IMR-90 (cell line): ENCODE measurements at regions of chr11 and their contacts with region 1.

Region 1: DNA sequence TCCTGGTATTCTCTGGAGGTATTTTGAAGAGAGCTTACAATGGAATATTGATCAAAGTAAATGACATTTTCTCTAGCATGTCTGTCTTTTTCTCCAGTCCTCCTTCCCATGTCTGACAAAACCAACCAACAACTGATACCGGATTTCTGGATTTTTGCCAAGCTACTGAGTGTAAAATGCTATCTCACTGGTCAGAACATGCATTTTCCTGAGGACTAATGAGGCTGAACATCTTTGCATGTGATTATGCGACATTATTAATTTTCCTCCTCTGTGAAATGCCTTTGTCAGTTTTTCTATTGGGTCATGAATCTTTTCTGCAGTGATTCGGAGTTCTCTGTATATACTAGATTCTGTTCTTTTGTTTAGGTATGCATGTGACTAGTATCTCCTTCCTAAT is 51.4 kb downstream of the CDON start:
- DNase-seq: no peak
- ATAC-seq: no peak
- H3K4me3 ChIP-seq: no peak overlapping the region
- H3K27ac ChIP-seq: no peak overlapping the region
- H3K4me1 ChIP-seq: no peaks in the 10 kb centered on the region
- H3K27me3 ChIP-seq: peaks cover 2% of the 10 kb centered on the region
- CTCF ChIP-seq: no peak
- POLR2A ChIP-seq: no peak
- RAD21 ChIP-seq: no peak

Region 2: DNA sequence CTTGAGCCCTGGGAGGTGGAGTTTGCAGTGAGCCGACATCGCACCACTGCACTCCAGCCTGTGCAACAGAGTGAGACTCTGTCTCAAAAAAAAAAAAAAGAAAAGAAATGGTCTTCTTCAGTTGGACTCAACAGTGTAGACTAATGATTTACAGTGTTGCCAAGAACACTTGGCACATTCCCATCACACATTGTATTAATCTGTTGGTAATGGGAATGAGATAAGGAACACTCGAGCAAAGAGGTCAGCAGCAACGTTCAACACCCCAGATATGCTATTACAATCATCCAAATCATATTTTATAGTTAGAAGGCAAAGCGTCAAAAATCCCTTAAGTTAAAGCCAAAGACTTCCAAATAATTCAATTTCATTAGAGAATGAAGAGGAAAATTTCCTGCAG is 36.9 kb after region 1 on chr11:
- CTCF ChIA-PET with region 1: no interaction called
- POLR2A ChIA-PET with region 1: no interaction called
- dilution Hi-C with region 1: no loop called
- in situ Hi-C with region 1: no loop called
- intact Hi-C with region 1: loop called (anchors 5 kb)
- DNase-seq: no peak
- ATAC-seq: no peak
- H3K4me3 ChIP-seq: no peak overlapping the region
- H3K27ac ChIP-seq: no peak overlapping the region
- H3K4me1 ChIP-seq: no peaks in the 10 kb centered on the region
- H3K27me3 ChIP-seq: peaks cover 5% of the 10 kb centered on the region
- CTCF ChIP-seq: no peak
- POLR2A ChIP-seq: no peak
- RAD21 ChIP-seq: no peak

Region 3: GRCh38 chr11:126186708-126187529 is 175.7 kb after region 1 on chr11:
- CTCF ChIA-PET with region 1: no interaction called
- POLR2A ChIA-PET with region 1: no interaction called
- dilution Hi-C with region 1: no loop called
- in situ Hi-C with region 1: no loop called
- intact Hi-C with region 1: no loop called
- DNase-seq: no peak
- ATAC-seq: peak; percentile 17; the same call in 1 of the 2 replicates
- H3K4me3 ChIP-seq: no peak overlapping the region
- H3K27ac ChIP-seq: no peak overlapping the region
- H3K4me1 ChIP-seq: no peaks in the 10 kb centered on the region
- H3K27me3 ChIP-seq: no peaks in the 10 kb centered on the region
- CTCF ChIP-seq: no peak
- POLR2A ChIP-seq: no peak
- RAD21 ChIP-seq: 0 out of 2 replicates have a peak, but pooled peaks have one; percentile 6

Region 4: GRCh38 chr11:126519764-126520734 is 508.8 kb after region 1 on chr11:
- CTCF ChIA-PET with region 1: no interaction called
- POLR2A ChIA-PET with region 1: no interaction called
- dilution Hi-C with region 1: no loop called
- in situ Hi-C with region 1: no loop called
- intact Hi-C with region 1: no loop called
- DNase-seq: no peak
- ATAC-seq: no peak
- H3K4me3 ChIP-seq: no peak overlapping the region
- H3K27ac ChIP-seq: no peak overlapping the region
- H3K4me1 ChIP-seq: no peaks in the 10 kb centered on the region
- H3K27me3 ChIP-seq: no peaks in the 10 kb centered on the region
- CTCF ChIP-seq: no peak
- POLR2A ChIP-seq: no peak
- RAD21 ChIP-seq: no peak